T-cell (primary cell): ENCODE measurements at regions of chr18 and their contacts with region 1.

Region 1: DNA sequence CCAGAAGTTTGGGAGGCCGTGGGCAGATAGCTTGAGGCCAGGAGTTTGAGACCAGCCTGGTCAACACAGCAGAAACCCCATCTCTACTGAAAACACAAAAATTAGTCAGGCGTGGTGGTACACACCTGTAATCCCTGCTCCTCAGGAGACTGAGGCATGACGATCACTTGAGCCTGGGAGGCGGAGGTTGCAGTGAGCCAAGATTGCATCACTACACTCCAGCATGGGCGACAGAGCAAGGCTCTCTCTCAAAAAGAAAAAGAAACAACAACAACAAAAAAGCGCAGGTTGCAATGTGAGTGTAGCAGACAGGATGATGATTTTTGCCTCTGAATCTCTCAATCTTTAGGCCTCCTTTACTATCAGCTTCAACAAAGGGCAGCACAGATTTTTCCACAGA is 2.7 kb upstream of the USP14 start:
- DNase-seq: no peak
- ATAC-seq: no peak
- H3K4me3 ChIP-seq: no peak overlapping the region
- H3K4me3 Mint-ChIP-seq: no peak overlapping the region
- H3K27ac ChIP-seq: no peak overlapping the region
- H3K27ac Mint-ChIP-seq: no peak overlapping the region
- H3K4me1 ChIP-seq: peaks cover 8 to 14% of the 10 kb centered on the region in 2 experiments
- H3K4me1 Mint-ChIP-seq: peaks cover 17 to 25% (median 23%) of the 10 kb centered on the region in 3 donors
- H3K27me3 ChIP-seq: peaks cover 6 to 7% of the 10 kb centered on the region in 2 experiments
- H3K27me3 Mint-ChIP-seq: peaks cover 0 to 4% of the 10 kb centered on the region in 2 donors

Region 2: DNA sequence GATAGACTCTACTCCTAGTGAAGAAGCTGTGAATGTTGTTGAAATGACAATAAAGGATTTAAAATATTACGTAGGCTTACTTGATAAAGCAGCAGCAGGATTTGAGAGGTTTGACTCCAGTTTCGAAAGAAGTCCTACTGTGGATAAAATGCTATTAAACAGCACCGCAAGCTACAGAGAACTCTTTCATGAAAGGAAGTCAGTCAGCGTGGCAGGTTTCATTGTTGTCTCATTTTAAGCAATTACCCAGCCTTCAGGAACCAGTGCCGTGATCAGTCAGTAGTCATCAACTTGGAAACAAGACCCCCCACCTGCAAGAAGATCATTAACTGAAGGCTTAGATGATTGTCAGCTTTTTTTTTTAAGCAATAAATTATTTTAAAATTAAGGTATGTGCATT is 16.7 kb after region 1 on chr18:
- CTCF ChIA-PET with region 1: interaction called in 1 of 2 experiments, 10 read pairs
- POLR2A ChIA-PET with region 1: no interaction called
- DNase-seq: no peak
- ATAC-seq: no peak
- H3K4me3 ChIP-seq: no peak overlapping the region
- H3K4me3 Mint-ChIP-seq: no peak overlapping the region
- H3K27ac ChIP-seq: no peak overlapping the region
- H3K27ac Mint-ChIP-seq: no peak overlapping the region
- H3K4me1 ChIP-seq: no peaks in the 10 kb centered on the region
- H3K4me1 Mint-ChIP-seq: peaks cover 18 to 32% (median 31%) of the 10 kb centered on the region in 3 donors
- H3K27me3 ChIP-seq: no peaks in the 10 kb centered on the region
- H3K27me3 Mint-ChIP-seq: no peaks in the 10 kb centered on the region

Region 3: GRCh38 chr18:361939-362309 is 206.2 kb after region 1 on chr18:
- CTCF ChIA-PET with region 1: no interaction called
- POLR2A ChIA-PET with region 1: no interaction called
- DNase-seq: no peak
- ATAC-seq: no peak
- H3K4me3 ChIP-seq: no peak overlapping the region
- H3K4me3 Mint-ChIP-seq: no peak overlapping the region
- H3K27ac ChIP-seq: no peak overlapping the region
- H3K27ac Mint-ChIP-seq: no peak overlapping the region
- H3K4me1 ChIP-seq: no peaks in the 10 kb centered on the region
- H3K4me1 Mint-ChIP-seq: no peaks in the 10 kb centered on the region
- H3K27me3 ChIP-seq: peaks cover 0 to 6% of the 10 kb centered on the region in 2 experiments
- H3K27me3 Mint-ChIP-seq: peaks cover 10 to 22% of the 10 kb centered on the region in 2 donors

Region 4: GRCh38 chr18:1292167-1292566 is 1136.5 kb after region 1 on chr18:
- CTCF ChIA-PET with region 1: no interaction called
- POLR2A ChIA-PET with region 1: no interaction called
- DNase-seq: no peak
- ATAC-seq: no peak
- H3K4me3 ChIP-seq: no peak overlapping the region
- H3K4me3 Mint-ChIP-seq: no peak overlapping the region
- H3K27ac ChIP-seq: no peak overlapping the region
- H3K27ac Mint-ChIP-seq: no peak overlapping the region
- H3K4me1 ChIP-seq: no peaks in the 10 kb centered on the region
- H3K4me1 Mint-ChIP-seq: no peaks in the 10 kb centered on the region
- H3K27me3 ChIP-seq: no peaks in the 10 kb centered on the region
- H3K27me3 Mint-ChIP-seq: no peaks in the 10 kb centered on the region